Activated naive CD4-positive, alpha-beta T cell treated with anti-CD3 and anti-CD28 coated beads for 36 hours (primary cell): ENCODE measurements at regions of chr2 and their contacts with region 1.

Region 1: GRCh38 chr2:222813177-222813843 is 47.5 kb upstream of the ACSL3 start:
- DNase-seq: peak; percentile 39
- H3K4me3 Mint-ChIP-seq: no peak overlapping the region
- H3K27ac Mint-ChIP-seq: peak overlapping the region; percentile 57
- H3K4me1 Mint-ChIP-seq: peaks cover 17% of the 10 kb centered on the region
- H3K27me3 Mint-ChIP-seq: peaks cover 8% of the 10 kb centered on the region

Region 2: DNA sequence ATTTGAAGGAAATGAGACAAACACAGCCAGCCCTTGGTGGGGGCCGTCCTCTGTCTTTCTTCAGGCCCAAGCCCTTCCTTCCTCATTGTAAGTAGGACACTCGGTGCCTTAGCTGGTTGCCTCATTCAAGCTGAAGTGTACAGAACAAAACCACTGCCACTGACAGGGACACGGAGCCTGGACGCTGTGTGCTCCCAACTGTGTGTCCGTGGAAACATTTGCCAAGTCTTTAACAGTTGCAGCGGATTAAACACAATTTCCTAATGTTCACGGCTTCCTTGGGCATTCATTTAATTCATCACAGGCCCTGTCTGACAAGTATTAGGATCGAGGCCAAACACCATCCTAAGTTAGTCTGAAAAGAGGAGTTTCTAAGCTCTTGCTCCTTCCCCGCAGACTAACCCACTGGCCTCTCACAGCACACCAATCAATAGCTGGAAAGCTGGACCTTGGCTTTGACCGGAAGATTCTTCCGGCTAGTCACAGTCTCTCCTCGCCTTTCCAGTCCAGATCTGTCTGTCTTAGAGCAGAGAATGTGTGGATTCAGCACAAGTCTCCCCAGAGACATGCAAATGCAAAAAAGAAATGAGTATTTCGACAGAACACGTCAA is 21.2 kb before region 1 on chr2:
- CTCF ChIA-PET with region 1: no interaction called
- intact Hi-C with region 1: loop called (anchors 1 kb)
- DNase-seq: no peak
- H3K4me3 Mint-ChIP-seq: no peak overlapping the region
- H3K27ac Mint-ChIP-seq: no peak overlapping the region
- H3K4me1 Mint-ChIP-seq: peaks cover 20% of the 10 kb centered on the region
- H3K27me3 Mint-ChIP-seq: no peaks in the 10 kb centered on the region

Region 3: DNA sequence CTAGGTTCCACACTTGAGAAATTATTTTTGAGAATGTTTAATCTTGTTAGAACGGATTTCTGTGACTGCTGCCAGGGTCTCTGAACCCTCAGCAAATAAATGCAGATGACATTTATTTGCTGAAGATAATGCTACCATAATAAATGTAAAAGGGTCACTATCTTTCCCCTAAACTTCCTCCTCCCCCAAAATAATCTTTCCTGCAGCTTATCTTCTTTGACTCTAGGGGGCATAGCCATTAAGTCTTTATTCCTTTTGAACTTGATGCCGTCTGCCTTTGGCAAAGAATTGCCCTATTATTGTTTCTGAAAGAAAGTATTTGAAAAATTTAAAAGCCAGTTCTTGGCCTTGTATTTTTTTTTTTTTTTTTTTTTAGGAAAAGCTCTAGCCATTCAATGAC is 16.0 kb before region 1 on chr2:
- CTCF ChIA-PET with region 1: no interaction called
- intact Hi-C with region 1: loop called (anchors 1 kb)
- DNase-seq: no peak
- H3K4me3 Mint-ChIP-seq: no peak overlapping the region
- H3K27ac Mint-ChIP-seq: no peak overlapping the region
- H3K4me1 Mint-ChIP-seq: no peaks in the 10 kb centered on the region
- H3K27me3 Mint-ChIP-seq: no peaks in the 10 kb centered on the region

Region 4: DNA sequence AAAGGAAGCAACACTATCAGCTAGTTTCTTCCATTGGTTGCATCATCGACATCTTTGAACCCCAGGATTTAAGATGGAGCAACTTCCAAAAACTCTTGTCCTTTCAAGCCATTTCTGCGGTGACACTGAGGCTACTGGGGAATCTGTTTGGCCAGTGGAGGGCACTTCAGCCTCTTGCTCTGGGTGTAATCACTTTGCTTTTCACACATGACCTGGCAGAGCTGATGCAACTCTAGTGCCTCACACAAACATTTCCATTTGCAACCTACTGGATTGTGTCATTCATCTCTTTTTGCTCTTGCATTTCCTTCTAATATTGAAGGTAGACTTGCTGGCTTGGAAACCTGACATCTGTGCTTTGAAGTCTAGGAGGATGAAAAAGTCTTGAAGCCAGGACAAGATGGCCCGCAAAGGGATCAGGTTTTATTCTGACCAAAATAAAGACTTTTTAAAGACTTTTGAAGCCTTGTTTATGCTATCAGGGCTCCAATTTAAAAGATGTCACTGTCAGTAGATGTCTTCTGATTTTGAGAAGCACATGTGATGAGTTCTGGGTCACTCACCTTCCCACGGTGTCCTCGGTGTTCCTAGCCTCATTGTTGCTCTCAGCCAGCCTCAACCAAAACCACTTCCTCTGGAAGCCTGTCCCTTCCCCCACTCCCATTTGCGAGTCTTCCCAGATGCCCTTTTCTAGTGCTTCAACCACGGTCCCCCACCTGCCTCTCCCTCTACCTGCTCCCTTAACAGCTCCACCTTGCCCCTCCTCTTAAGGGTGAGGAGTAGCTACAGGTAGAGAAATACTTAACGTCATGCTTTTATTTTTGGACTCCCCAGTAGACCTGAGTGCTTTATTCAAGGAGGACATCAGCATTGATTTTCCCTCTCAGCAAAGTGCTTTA is 168.9 kb after region 1 on chr2:
- CTCF ChIA-PET with region 1: no interaction called
- intact Hi-C with region 1: no loop called
- DNase-seq: peak; percentile 45
- H3K4me3 Mint-ChIP-seq: no peak overlapping the region
- H3K27ac Mint-ChIP-seq: no peak overlapping the region
- H3K4me1 Mint-ChIP-seq: peaks cover 12% of the 10 kb centered on the region
- H3K27me3 Mint-ChIP-seq: peaks cover 24% of the 10 kb centered on the region